Activated CD8-positive, alpha-beta T cell treated with anti-CD3 and anti-CD28 coated beads for 36 hours (primary cell): ENCODE measurements at regions of chr11 and their contacts with region 1.

Region 1: GRCh38 chr11:128172046-128172878 is 415.1 kb downstream of the ETS1 start:
- DNase-seq: peak; percentile 96
- ATAC-seq: peak; percentile 81
- H3K4me3 Mint-ChIP-seq: no peak overlapping the region
- H3K27ac Mint-ChIP-seq: no peak overlapping the region
- H3K4me1 Mint-ChIP-seq: peaks cover 16% of the 10 kb centered on the region
- H3K27me3 Mint-ChIP-seq: no peaks in the 10 kb centered on the region
- CTCF ChIP-seq: peak; percentile 69

Region 2: DNA sequence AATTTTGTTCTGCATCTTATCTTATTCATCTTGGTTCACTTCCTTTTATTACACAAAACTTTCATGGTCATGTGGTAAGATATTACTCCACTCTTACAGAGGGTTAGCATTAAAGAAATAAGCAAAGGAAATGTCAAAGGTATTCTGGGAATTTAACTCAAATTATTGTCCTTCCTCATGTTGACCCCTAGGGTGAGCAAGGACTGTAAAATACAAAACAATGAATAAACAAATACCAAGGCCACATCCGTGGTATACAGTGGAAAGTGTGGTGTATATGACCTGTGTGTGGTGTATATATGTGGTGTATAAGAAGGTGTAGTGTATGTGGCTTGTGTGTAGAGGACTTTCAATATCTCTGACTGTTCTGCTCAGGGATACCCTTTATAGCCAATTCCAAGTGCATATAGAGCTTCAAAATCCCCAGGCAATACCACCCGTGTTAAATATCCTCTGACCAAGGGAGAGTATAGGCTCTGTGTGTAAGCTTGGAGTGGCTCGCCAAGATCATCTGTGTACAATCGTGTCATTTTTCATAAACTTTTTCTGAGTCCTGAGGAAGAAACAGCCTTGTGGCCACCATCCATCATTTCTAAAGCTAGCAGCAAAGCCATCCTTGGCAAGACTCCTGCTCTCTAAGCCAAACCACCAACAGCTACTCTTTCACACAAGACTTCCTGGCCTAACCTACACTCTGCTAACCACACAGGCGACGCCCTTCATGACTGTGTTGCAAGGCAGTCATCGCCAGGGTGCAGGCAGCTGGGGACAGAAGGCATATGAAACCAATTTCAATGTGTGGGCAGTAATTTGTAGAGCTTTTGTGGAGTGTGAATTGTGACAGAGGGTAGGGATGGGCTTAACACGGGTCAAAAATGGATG is 132.9 kb before region 1 on chr11:
- CTCF ChIA-PET with region 1: interaction called, 11 read pairs
- POLR2A ChIA-PET with region 1: no interaction called
- intact Hi-C with region 1: no loop called
- DNase-seq: peak; percentile 91
- ATAC-seq: peak; percentile 90
- H3K4me3 Mint-ChIP-seq: peak overlapping the region; percentile 58
- H3K27ac Mint-ChIP-seq: peak overlapping the region; percentile 93
- H3K4me1 Mint-ChIP-seq: peaks cover 42% of the 10 kb centered on the region
- H3K27me3 Mint-ChIP-seq: no peaks in the 10 kb centered on the region
- CTCF ChIP-seq: peak; percentile 45

Region 3: DNA sequence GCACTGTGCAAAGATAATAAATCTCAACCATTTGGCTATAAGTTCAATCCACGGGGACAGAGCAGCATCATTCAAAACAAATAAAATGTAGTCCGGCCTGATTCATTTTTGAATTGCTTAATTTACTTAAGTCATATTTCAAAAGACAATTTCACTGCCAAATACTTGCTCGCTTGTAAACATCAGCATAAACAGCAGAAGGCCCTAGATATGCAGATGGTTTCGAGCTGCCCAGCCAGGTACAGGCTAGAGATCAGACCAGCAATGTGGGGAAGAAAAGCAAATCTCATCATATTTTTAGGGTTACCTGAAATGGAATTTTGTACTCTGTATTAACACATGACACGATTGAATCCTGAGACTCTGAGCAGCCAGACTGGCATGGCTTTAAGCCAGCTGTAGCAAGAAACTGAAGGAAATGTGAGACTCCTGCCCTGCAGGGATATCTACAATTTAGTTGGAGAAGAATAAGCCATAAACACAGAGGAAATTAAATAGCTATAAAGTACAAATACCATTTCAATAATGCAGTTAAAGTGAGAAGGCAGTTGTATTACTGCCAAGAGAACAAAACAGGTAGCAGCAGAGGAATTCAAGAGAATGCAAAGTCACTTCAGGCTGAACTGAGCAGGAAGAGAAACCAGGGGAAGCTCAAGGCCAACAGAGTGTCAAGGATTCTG is 25.2 kb before region 1 on chr11:
- CTCF ChIA-PET with region 1: no interaction called
- POLR2A ChIA-PET with region 1: no interaction called
- intact Hi-C with region 1: no loop called
- DNase-seq: no peak
- ATAC-seq: no peak
- H3K4me3 Mint-ChIP-seq: no peak overlapping the region
- H3K27ac Mint-ChIP-seq: no peak overlapping the region
- H3K4me1 Mint-ChIP-seq: no peaks in the 10 kb centered on the region
- H3K27me3 Mint-ChIP-seq: no peaks in the 10 kb centered on the region
- CTCF ChIP-seq: no peak

Region 4: GRCh38 chr11:128279866-128280265 is 107.6 kb after region 1 on chr11:
- CTCF ChIA-PET with region 1: interaction called, 18 read pairs
- POLR2A ChIA-PET with region 1: no interaction called
- intact Hi-C with region 1: loop called (anchors 5 kb)
- DNase-seq: no peak
- ATAC-seq: no peak
- H3K4me3 Mint-ChIP-seq: no peak overlapping the region
- H3K27ac Mint-ChIP-seq: no peak overlapping the region
- H3K4me1 Mint-ChIP-seq: peaks cover 13% of the 10 kb centered on the region
- H3K27me3 Mint-ChIP-seq: peaks cover 2% of the 10 kb centered on the region
- CTCF ChIP-seq: no peak

Region 5: GRCh38 chr11:128624269-128625175 is 452.3 kb after region 1 on chr11:
- CTCF ChIA-PET with region 1: interaction called, 139 read pairs
- POLR2A ChIA-PET with region 1: interaction called, 3 read pairs
- intact Hi-C with region 1: no loop called
- DNase-seq: peak; percentile 77
- ATAC-seq: peak; percentile 57
- H3K4me3 Mint-ChIP-seq: peak overlapping the region; percentile 56
- H3K27ac Mint-ChIP-seq: peak overlapping the region; percentile 94
- H3K4me1 Mint-ChIP-seq: peaks cover 97% of the 10 kb centered on the region
- H3K27me3 Mint-ChIP-seq: no peaks in the 10 kb centered on the region
- CTCF ChIP-seq: no peak